Activated CD4-positive, alpha-beta memory T cell treated with anti-CD3 and anti-CD28 coated beads for 36 hours (primary cell): ENCODE measurements at regions of chr1 and their contacts with region 1.

Region 1: DNA sequence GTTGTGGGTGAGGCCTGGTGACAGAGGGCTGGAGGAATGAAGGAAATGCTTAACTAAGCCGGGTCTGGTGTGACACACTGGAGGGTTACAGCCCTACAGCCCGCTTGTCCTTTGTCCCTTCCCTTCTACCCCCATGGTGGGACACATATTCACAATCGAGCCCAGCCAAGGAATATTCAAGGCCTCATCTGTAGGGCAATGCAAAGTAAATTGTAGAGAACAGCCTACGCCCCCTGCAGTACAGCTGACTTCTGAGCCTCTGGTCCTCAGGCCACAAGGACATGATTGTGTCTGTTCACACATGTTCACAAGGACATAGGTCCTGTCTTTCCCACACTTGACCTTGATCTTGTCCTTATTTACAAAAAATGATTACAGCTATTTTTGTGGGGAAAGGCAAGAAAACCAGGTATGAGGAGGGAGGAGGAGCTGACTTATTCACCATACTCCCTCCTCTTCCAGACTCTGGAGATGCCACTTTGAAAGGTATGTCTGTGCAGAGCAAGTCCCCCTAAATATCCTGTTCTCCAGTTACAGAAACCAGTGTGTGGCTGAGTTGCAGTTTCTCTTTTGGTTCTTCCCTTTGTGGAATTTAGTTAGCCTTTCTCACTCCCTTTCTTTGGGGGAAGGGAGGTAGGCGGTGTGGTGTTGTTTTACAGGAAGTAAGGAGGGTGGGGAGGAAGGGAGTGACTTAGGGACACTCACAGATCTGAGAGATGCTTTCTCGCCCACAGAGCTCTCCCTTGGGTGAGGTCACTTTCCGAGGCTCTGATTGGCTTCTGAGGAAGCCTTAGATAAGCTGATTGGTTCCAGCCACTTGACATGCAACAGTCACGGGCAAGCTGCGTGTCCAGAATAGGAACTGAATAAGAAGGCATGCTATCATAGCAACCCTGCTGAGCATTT is 14.6 kb downstream of the POLR3GL start:
- DNase-seq: peak; percentile 92
- H3K4me3 Mint-ChIP-seq: no peak overlapping the region
- H3K27ac Mint-ChIP-seq: no peak overlapping the region
- H3K4me1 Mint-ChIP-seq: peaks cover 3% of the 10 kb centered on the region
- H3K27me3 Mint-ChIP-seq: no peaks in the 10 kb centered on the region

Region 2: DNA sequence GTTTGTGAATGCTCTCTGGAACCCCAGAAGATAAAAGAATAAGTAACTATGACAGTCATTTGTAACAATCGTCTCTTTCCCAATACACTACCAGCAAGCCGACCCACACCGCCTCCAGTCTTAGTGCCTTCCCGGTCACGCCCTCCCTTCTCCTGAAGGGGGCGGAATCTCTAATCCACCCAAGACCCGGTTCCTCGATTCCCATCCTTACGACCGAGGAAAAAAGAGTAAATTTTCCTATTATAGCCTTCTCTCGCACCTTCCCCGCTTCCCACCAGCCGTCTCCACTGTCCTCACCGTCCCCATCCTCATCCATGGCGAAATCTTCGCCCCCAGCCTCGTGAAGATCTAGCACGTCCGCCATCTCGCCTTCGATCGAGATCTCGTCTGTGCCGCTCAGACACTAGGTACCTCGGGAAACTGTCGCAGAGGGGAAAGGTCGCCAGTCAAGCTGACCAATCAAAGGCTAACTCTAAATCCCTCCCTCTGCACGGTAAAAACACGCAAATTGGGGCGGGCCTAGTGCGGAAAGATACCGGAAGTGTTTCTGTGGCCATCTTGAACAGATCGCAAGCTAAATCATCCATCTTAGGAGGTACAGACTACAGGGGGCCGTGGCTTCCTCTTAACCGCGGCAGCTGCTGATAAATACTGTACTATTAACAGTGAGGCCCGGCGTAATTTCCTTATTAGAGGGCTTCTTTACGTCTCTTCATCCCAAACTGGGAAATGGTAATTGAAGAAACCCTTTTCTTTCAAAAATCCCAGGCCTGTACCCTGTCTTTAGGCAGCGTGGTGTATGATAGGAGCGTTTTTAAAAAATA is 51.8 kb before region 1 on chr1 and contains the start of gene RBM8A:
- CTCF ChIA-PET with region 1: interaction called, 10 read pairs
- POLR2A ChIA-PET with region 1: interaction called, 22 read pairs
- intact Hi-C with region 1: no loop called
- DNase-seq: peak; percentile 97
- H3K4me3 Mint-ChIP-seq: no peak within 1 kb of the TSS
- H3K27ac Mint-ChIP-seq: no peak within 1 kb of the TSS
- H3K4me1 Mint-ChIP-seq: peaks cover 25% of the 10 kb centered on the region
- H3K27me3 Mint-ChIP-seq: no peaks in the 10 kb centered on the region
- total RNA-seq, gene RBM8A: 275 to 277 TPM

Region 3: GRCh38 chr1:145963995-145964901 is 14.9 kb before region 1 on chr1 and contains the starts of genes ANKRD34A and POLR3GL:
- CTCF ChIA-PET with region 1: interaction called, 62 read pairs
- POLR2A ChIA-PET with region 1: interaction called, 32 read pairs
- intact Hi-C with region 1: loop called (anchors 1 kb)
- DNase-seq: peak; percentile 96
- H3K4me3 Mint-ChIP-seq: peak within 1 kb of the TSS; percentile 98
- H3K27ac Mint-ChIP-seq: peak within 1 kb of the TSS; percentile 95
- H3K4me1 Mint-ChIP-seq: peaks cover 31% of the 10 kb centered on the region
- H3K27me3 Mint-ChIP-seq: no peaks in the 10 kb centered on the region
- total RNA-seq, gene ANKRD34A: 4.6 to 4.7 TPM
- total RNA-seq, gene POLR3GL: 27.3 to 30.9 TPM

Region 4: GRCh38 chr1:145996433-145997015 is 17.4 kb after region 1 on chr1 and contains the start of gene TXNIP:
- CTCF ChIA-PET with region 1: interaction called, 72 read pairs
- POLR2A ChIA-PET with region 1: interaction called, 183 read pairs
- intact Hi-C with region 1: loop called (anchors 1 kb)
- DNase-seq: peak; percentile 97
- H3K4me3 Mint-ChIP-seq: peak within 1 kb of the TSS; percentile 88
- H3K27ac Mint-ChIP-seq: peak within 1 kb of the TSS; percentile 92
- H3K4me1 Mint-ChIP-seq: peaks cover 63% of the 10 kb centered on the region
- H3K27me3 Mint-ChIP-seq: no peaks in the 10 kb centered on the region
- total RNA-seq, gene TXNIP: 82.6 to 88.8 TPM

Region 5: DNA sequence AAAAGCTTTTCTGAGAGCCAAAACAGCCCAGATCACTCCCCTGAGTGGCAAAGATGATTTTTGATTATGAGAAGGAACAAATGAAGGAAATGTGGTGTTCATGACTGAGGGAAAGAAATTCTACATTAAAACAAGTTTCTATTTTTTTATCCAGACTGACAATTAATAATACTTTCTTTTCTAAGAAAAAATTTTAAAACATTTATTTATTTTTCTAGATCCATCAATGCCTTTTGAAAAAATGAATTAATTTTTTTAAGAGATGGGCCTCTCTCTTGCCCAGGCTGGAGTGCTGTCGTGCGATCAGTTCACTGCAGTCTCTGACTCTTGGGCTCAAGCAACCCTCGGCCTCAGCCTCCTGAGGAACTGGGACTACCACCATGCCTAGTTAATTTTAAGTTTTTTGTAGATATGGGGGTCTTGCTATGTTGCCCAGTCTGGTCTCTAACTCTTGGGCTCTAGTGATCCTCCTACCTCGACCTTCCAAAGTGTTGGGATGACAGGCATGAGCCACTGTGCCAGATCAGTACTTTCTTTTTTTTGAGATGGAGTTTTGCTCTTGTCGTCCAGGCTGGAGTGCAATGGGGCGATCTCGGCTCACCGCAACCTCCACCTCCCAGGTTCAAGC is 28.5 kb after region 1 on chr1:
- CTCF ChIA-PET with region 1: interaction called, 222 read pairs
- POLR2A ChIA-PET with region 1: interaction called, 25 read pairs
- intact Hi-C with region 1: loop called (anchors 1 kb)
- DNase-seq: no peak
- H3K4me3 Mint-ChIP-seq: no peak overlapping the region
- H3K27ac Mint-ChIP-seq: peak overlapping the region; percentile 76
- H3K4me1 Mint-ChIP-seq: peaks cover 40% of the 10 kb centered on the region
- H3K27me3 Mint-ChIP-seq: no peaks in the 10 kb centered on the region

Region 6: GRCh38 chr1:146019231-146020057 is 40.3 kb after region 1 on chr1:
- CTCF ChIA-PET with region 1: interaction called, 16 read pairs
- POLR2A ChIA-PET with region 1: no interaction called
- intact Hi-C with region 1: no loop called
- DNase-seq: no peak
- H3K4me3 Mint-ChIP-seq: peak overlapping the region; percentile 6
- H3K27ac Mint-ChIP-seq: no peak overlapping the region
- H3K4me1 Mint-ChIP-seq: peaks cover 8% of the 10 kb centered on the region
- H3K27me3 Mint-ChIP-seq: peaks cover 29% of the 10 kb centered on the region

Region 7: DNA sequence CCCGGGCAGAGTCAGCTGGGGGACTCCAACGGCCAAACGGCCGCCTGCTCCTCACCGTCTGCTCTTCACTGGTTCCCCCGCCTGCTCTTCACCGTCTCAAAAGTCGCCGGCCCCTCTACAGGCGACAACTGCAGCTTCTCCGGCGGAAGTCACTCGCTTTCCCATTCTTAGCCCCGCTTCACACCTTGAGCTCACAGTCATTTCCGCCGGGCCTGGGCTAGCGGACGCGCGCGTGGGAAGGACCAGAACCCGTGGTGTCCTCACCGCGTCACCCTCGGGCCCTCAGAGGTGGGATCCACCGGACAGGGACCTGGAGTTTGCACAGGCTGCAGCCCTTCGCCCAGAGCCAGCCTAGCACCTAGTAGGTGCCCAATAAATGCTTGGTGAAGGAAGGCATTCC is 70.3 kb after region 1 on chr1:
- CTCF ChIA-PET with region 1: no interaction called
- POLR2A ChIA-PET with region 1: interaction called, 18 read pairs
- intact Hi-C with region 1: no loop called
- DNase-seq: peak; percentile 31
- H3K4me3 Mint-ChIP-seq: no peak overlapping the region
- H3K27ac Mint-ChIP-seq: no peak overlapping the region
- H3K4me1 Mint-ChIP-seq: peaks cover 32% of the 10 kb centered on the region
- H3K27me3 Mint-ChIP-seq: no peaks in the 10 kb centered on the region